ENCODE measurements at regions of chr7 and their contacts with region 1.

Region 1: DNA sequence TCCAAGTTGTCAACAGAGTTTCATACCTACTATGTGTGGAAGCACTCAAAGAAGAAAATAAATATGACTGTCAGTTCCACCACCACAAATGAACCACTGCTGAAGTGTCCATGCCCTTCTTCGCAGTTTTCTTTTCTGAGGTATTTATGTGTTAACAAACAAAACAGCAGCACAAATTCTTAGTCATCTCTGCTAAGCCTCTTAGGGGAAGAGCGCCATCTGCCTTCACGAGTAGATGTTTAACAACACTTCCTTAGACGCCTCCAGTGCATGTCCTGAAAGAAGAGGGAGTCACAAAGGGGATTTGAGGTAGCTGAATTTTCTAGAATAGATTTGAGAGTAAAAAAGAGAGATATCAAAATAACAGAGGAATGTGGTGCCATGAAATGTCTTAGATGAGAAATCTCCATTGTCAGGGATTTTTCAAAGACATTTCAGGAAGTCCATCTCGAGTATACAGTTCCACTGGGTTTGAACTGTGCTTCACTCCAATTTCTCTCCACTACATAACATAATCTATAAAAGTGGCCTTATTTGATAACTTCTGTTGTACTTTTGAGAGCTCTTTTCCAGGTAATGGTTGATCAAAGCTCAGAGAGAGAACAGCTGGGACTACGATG is 775.3 kb upstream of the POM121L12 start:
- DNase-seq: no peak

Region 2: GRCh38 chr7:51430480-51431086 is 829.6 kb before region 1 on chr7:
- intact Hi-C with region 1: loop called (anchors 10 kb)
- DNase-seq: peak in 6 of 10 donors; percentile 31 to 88 (median 58)

Region 3: GRCh38 chr7:52302765-52303520 is 42.8 kb after region 1 on chr7:
- intact Hi-C with region 1: no loop called
- DNase-seq: peak in 2 of 10 donors; percentile 59 to 68

Region 4: GRCh38 chr7:52340067-52340466 is 79.9 kb after region 1 on chr7:
- intact Hi-C with region 1: no loop called
- DNase-seq: no peak

Measured in posterior cingulate gyrus (tissue), 11 donors.